Vagina (tissue), 2 donors: ENCODE measurements at regions of chr3 and their contacts with region 1.

Region 1: GRCh38 chr3:142586803-142587406 is 8.4 kb upstream of the ATR start:
- DNase-seq: no peak
- H3K4me3 ChIP-seq: no peak overlapping the region
- H3K27ac ChIP-seq: no peak overlapping the region
- H3K4me1 ChIP-seq: no peaks in the 10 kb centered on the region
- H3K27me3 ChIP-seq: no peaks in the 10 kb centered on the region
- CTCF ChIP-seq: peak in 2 of 3 experiments; percentile 40 to 42
- POLR2A ChIP-seq: no peak

Region 2: GRCh38 chr3:142993958-142994442 is 407.1 kb after region 1 on chr3:
- intact Hi-C with region 1: loop called (anchors 10 kb)
- DNase-seq: no peak
- H3K4me3 ChIP-seq: no peak overlapping the region
- H3K27ac ChIP-seq: no peak overlapping the region
- H3K4me1 ChIP-seq: no peaks in the 10 kb centered on the region
- H3K27me3 ChIP-seq: no peaks in the 10 kb centered on the region
- CTCF ChIP-seq: peak; percentile 27 to 55 (median 46)
- POLR2A ChIP-seq: no peak

Region 3: DNA sequence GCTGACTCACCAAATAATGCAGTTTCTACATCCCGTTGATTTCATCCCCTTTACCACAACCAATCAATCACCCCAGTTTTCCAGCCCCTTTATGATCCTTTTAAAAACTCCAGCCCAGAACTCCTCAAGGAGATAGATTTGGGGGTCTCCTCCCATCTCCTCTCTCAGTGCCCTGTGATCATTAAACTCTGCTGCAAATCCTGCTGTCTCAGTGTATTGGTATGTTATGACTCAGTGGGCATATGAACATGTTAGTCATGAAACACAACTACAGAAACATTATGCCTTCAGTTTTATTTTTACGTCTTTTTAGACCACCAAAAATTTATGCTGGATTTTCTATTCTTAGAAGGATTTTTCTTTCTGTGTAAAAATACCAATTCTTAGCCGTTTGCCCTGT is 1598.4 kb after region 1 on chr3:
- intact Hi-C with region 1: no loop called
- DNase-seq: no peak
- H3K4me3 ChIP-seq: no peak overlapping the region
- H3K27ac ChIP-seq: no peak overlapping the region
- H3K4me1 ChIP-seq: no peaks in the 10 kb centered on the region
- H3K27me3 ChIP-seq: no peaks in the 10 kb centered on the region
- CTCF ChIP-seq: no peak
- POLR2A ChIP-seq: no peak